HEK293 (cell line): ENCODE measurements at regions of chr9 and their contacts with region 1.

Region 1: DNA sequence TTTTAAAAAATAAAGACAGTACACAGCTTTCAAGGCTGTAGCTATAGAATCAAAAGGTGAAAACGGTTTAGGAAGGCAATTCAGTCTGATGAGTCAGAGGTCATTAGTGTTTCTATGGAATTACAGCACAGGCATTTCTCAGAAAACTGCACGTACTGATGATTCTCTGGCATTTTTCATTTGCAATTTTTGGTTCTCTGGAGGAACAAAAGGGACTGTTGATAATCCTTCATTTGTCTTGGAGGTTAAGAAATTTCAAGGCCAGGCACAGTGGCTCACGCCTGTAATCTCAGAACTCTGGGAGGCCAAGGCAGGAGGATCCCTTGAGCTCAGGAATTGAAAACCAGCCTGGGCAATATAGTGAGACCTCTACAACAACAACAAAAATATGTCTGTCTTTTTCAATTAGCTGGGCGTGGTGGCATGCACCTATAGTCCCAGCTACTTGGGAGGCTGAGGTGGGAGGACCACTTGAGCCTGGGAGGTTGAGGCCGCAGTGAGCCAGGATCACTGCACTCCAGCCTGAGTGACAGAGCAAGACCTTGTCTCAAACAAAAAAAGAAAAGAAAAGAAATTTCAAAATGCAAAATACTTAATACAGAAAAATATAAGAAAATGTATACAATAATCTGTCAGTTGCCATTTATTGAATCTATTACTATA is 27.3 kb downstream of the NR6A1 start:
- H3K4me3 ChIP-seq: no peak overlapping the region
- H3K27ac ChIP-seq: no peak overlapping the region
- H3K4me1 ChIP-seq: peaks cover 2% of the 10 kb centered on the region; the same call in 1 of the 2 replicates
- CTCF ChIP-seq: no peak

Region 2: GRCh38 chr9:124754289-124754688 is 10.5 kb after region 1 on chr9:
- CTCF ChIA-PET with region 1: interaction called, 10 read pairs
- POLR2A ChIA-PET with region 1: no interaction called
- H3K4me3 ChIP-seq: no peak overlapping the region
- H3K27ac ChIP-seq: no peak overlapping the region
- H3K4me1 ChIP-seq: peaks cover 34% of the 10 kb centered on the region
- CTCF ChIP-seq: no peak

Region 3: GRCh38 chr9:124779362-124780059 is 35.7 kb after region 1 on chr9:
- CTCF ChIA-PET with region 1: no interaction called
- POLR2A ChIA-PET with region 1: no interaction called
- H3K4me3 ChIP-seq: no peak overlapping the region
- H3K27ac ChIP-seq: no peak overlapping the region
- H3K4me1 ChIP-seq: peaks cover 2% of the 10 kb centered on the region; the same call in 1 of the 2 replicates
- CTCF ChIP-seq: no peak

Region 4: GRCh38 chr9:124861342-124862229 is 117.8 kb after region 1 on chr9 and contains the starts of genes ARPC5L and RPL35:
- CTCF ChIA-PET with region 1: interaction called, 3 read pairs
- POLR2A ChIA-PET with region 1: interaction called, 10 read pairs
- H3K4me3 ChIP-seq: peak within 1 kb of the TSS; percentile 86
- H3K27ac ChIP-seq: peak within 1 kb of the TSS; percentile 100
- H3K4me1 ChIP-seq: no peaks in the 10 kb centered on the region
- CTCF ChIP-seq: peak; percentile 59; the same call in 1 of the 2 replicates

Region 5: DNA sequence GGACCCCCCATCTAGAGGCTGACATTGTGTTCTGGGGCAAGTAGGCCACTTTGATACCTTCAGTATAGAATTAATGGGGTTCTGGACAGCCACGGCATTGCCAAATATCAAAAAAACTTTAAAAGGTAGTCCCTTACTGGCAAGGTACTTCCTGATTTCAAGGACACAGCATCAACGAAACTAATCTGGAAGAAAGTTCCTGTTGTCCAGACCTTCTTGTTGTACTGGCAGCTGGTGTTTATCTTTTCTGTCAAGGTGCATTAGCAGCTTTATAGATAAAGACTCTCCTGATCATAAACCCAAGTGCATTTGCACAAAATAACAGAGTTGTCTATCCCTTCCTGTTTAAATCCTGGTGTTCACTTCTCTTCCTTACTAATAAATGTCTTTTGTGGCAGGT is 220.8 kb after region 1 on chr9:
- CTCF ChIA-PET with region 1: no interaction called
- POLR2A ChIA-PET with region 1: no interaction called
- H3K4me3 ChIP-seq: no peak overlapping the region
- H3K27ac ChIP-seq: no peak overlapping the region
- H3K4me1 ChIP-seq: no peaks in the 10 kb centered on the region
- CTCF ChIP-seq: no peak